ENCODE measurements at regions of chr14 and their contacts with region 1.

Region 1: GRCh38 chr14:26276757-26277156 is 321.1 kb downstream of the NOVA1 start:
- DNase-seq: peak in 2 of 10 donors; percentile 18 to 19

Region 2: GRCh38 chr14:26163791-26164190 is 113.0 kb before region 1 on chr14:
- intact Hi-C with region 1: loop called (anchors 5 kb)
- DNase-seq: no peak